ENCODE measurements at regions of chr14 and their contacts with region 1.

Region 1: DNA sequence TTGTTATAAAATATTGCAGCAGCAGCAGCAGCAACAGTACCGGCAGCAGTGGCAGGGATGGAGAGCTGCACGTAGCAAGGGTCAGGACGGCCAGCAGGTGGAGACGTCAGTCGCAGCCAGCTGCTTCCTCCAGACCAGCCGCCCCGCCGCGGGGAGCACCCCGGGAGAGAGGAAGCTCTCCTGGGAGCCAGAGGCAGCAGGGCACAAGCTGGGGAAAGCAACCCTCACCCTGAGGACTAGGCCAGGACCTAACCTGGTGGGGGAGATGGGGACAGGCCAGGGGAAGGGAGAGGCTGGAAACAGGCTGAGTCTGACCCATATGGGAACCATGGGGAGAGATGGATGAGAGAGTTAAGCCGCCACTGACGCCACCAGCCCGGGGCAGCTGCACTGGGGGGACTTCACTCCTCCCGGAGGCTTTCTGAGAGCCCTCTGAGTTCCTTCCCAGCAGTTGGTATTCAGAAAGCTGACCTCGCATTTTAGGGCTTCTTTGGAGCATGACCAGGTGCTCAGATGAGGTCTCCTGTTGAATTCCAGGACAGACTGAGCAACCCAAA is 56.3 kb downstream of the SPTB start:
- DNase-seq: peak; percentile 92

Region 2: DNA sequence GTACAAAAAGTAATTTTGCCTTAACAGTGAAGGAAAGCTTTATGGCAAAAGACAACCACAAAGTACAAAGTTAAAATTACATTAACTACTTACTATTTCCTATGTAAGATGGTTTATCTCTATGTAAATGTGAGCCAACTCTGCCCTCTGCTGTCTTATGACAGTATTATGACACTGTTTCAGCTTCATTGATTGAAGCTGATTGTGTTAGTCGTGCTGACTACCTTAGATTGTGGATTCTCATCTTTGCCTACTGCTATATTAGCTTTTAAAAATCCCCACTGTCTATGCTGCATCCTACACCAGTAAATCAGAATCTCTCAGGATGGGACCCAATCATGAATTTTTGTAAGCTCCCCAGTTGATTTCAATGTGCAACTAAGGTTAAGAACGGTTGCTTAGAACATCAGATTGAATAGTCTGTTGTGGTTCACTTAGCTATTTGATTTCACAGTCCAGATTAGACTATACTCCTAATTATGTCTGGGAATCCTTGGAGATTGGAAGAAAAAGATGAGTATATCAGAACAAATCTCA is 68.5 kb after region 1 on chr14:
- intact Hi-C with region 1: loop called (anchors 5 to 10 kb)
- DNase-seq: no peak

Measured in posterior vena cava (tissue), 2 donors.